Sciatic nerve (tissue), 2 donors: ENCODE measurements at regions of chr10 and their contacts with region 1.

Region 1: GRCh38 chr10:74262856-74263255 is 111.8 kb downstream of the ADK start:
- DNase-seq: no peak
- ATAC-seq: no peak

Region 2: GRCh38 chr10:74026428-74027015 is 236.3 kb before region 1 on chr10:
- intact Hi-C with region 1: no loop called
- DNase-seq: no peak
- ATAC-seq: no peak

Region 3: DNA sequence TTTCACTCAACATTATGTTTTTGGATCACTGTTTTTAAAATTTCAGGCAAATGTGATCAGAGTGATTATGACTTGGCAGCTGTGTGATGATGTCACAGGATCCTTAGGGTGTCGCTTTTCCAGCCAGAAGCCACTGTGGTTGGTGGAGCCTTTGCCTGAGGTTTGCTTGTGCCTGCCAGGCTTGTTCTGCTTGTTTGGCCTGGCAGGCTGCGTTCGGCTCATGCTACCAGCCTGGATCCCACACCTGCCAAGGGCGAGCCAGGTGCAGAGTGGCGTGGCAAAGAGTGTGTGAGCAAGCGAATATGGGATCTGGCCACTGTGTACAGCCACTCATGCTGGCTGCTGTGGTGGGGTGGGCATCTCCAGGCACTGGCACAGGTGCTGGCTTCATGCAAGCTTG is 56.1 kb before region 1 on chr10:
- intact Hi-C with region 1: no loop called
- DNase-seq: no peak
- ATAC-seq: no peak

Region 4: GRCh38 chr10:75019370-75019769 is 756.5 kb after region 1 on chr10:
- intact Hi-C with region 1: loop called (anchors 10 kb)
- DNase-seq: no peak
- ATAC-seq: peak; percentile 51

Region 5: GRCh38 chr10:75235375-75236177 is 972.7 kb after region 1 on chr10 and contains the start of gene COMTD1:
- intact Hi-C with region 1: loop called (anchors 10 kb)
- DNase-seq: peak; percentile 95
- ATAC-seq: peak; percentile 78
- total RNA-seq, gene COMTD1: 13.0 TPM